IMR-90 (cell line): ENCODE measurements at regions of chr7 and their contacts with region 1.

Region 1: DNA sequence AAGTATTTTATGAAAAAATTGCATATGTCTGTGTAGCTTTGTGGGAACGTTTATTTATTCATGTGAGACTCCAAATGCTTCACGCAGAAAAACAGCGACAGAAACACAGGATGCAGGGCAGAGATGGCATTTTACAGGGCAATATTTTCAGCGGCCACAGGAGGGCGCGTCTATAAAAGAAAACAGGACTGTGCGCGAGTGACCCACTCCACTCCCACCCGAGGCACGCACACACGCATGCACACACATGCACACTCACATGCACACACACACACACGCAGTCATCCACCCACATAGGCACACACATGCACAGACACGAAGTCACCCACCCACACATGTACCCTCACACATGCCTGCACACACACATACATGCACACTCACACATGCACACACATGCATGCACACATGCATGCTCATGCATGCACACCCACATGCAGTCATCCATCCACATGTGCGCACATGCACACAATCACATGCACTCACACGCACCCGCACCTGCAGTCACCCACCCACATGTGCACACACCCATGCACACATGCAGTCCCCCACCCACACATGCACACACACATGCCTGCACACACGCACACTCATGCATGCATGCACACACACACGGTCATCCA is 96.3 kb downstream of the DNAJB6 start:
- DNase-seq: peak; percentile 17
- ATAC-seq: peak; percentile 73
- H3K4me3 ChIP-seq: peak overlapping the region; percentile 9; the same call in 1 of the 2 replicates
- H3K27ac ChIP-seq: no peak overlapping the region
- H3K4me1 ChIP-seq: peaks cover 4% of the 10 kb centered on the region; the same call in 1 of the 2 replicates
- H3K27me3 ChIP-seq: no peaks in the 10 kb centered on the region
- CTCF ChIP-seq: peak; percentile 63
- POLR2A ChIP-seq: no peak
- RAD21 ChIP-seq: peak; percentile 55

Region 2: DNA sequence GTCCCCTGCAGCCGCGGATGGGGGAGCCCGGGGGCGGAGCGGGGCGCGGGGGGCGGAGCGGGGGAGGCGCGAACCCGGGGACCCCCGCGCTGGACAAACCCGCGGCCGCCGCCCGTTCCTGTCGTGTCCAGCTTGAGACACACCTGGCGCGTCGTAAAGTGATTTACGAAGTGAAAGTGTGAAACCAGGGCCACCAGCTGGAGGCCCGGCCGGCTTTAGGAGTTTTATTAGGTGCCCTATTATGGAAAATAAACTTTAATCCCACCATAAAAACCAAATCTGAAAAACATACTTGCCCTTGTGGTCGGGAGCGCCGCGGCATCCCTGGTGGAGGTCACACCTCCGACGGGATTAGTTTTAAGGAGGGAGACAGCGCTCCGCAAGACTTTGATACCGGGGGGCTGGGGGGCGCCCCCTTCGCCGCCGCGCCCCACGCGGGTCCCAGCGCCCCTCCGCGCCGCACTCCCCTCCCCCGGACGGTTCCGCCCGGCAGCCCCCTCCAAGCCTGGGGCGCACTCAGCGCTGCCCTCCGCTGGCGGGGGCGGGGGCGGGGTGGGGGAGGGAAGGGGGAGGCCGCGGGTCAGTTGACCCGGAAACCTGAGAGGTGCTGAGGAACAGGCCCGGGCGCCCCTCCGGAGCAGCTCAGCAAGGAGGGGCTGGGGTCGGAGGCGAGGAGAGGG is 432.9 kb before region 1 on chr7:
- CTCF ChIA-PET with region 1: no interaction called
- POLR2A ChIA-PET with region 1: no interaction called
- dilution Hi-C with region 1: no loop called
- in situ Hi-C with region 1: no loop called
- intact Hi-C with region 1: no loop called
- DNase-seq: no peak
- ATAC-seq: no peak
- H3K4me3 ChIP-seq: peak overlapping the region; percentile 23; the same call in 1 of the 2 replicates
- H3K27ac ChIP-seq: no peak overlapping the region
- H3K4me1 ChIP-seq: no peaks in the 10 kb centered on the region
- H3K27me3 ChIP-seq: peaks cover 85% of the 10 kb centered on the region
- CTCF ChIP-seq: no peak
- POLR2A ChIP-seq: no peak
- RAD21 ChIP-seq: no peak

Region 3: DNA sequence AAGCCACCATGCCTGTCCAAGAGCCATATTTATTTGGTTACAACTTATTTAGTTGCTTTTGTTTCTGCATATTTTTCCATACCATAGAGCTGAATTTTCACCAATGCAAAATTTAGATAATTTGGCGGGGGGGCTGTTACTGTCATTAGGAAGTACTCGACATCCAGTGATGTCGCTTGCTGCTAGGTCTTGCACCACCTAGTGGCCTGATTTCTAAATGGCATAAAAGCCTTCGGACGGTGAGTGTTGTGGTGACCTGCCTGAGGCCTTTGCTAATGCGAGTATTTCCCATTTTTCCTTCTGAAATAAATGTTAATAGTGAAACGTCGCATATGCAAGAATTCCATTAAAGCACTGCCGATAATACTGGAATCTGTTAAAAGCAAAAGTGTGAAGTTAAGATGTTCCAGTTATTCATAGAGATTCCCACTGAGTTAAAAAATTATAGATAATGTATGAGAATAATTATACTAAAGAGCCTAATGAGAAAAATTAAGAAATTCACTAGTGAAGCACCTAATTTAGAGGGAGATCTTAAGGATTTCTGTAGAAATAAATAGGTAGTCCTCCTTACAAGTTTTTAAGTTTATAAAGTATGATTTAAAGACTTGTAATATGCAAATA is 182.3 kb before region 1 on chr7:
- CTCF ChIA-PET with region 1: no interaction called
- POLR2A ChIA-PET with region 1: no interaction called
- dilution Hi-C with region 1: no loop called
- in situ Hi-C with region 1: no loop called
- intact Hi-C with region 1: no loop called
- DNase-seq: peak; percentile 66
- ATAC-seq: peak; percentile 73
- H3K4me3 ChIP-seq: no peak overlapping the region
- H3K27ac ChIP-seq: no peak overlapping the region
- H3K4me1 ChIP-seq: no peaks in the 10 kb centered on the region
- H3K27me3 ChIP-seq: no peaks in the 10 kb centered on the region
- CTCF ChIP-seq: peak; percentile 64
- POLR2A ChIP-seq: no peak
- RAD21 ChIP-seq: peak; percentile 51

Region 4: DNA sequence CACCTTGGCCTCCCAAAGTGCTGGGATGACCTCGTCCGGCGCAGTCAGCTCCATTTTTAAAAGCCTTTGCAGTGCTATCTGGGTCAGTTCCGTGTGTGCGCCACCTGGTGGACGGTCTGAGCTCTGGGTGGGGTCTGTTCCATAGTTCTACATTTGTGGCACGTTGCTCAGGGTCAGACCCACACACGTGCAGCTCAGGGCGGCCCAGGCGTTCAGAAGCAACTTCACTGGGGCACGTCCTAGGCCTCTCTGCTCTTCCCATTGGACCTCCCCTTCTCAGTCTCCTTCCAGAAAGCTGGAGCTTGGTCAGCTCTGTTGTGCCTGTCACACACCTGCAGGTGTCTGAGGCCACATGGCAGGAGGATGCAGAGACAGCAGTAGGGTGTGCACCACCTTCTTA is 41.6 kb after region 1 on chr7:
- CTCF ChIA-PET with region 1: interaction called, 4 read pairs
- POLR2A ChIA-PET with region 1: no interaction called
- dilution Hi-C with region 1: no loop called
- in situ Hi-C with region 1: no loop called
- intact Hi-C with region 1: loop called (anchors 1 kb)
- DNase-seq: no peak
- ATAC-seq: peak; percentile 57; the same call in 1 of the 2 replicates
- H3K4me3 ChIP-seq: no peak overlapping the region
- H3K27ac ChIP-seq: no peak overlapping the region
- H3K4me1 ChIP-seq: no peaks in the 10 kb centered on the region
- H3K27me3 ChIP-seq: no peaks in the 10 kb centered on the region
- CTCF ChIP-seq: peak; percentile 35
- POLR2A ChIP-seq: no peak
- RAD21 ChIP-seq: no peak

Region 5: GRCh38 chr7:158976849-158977593 is 1544.0 kb after region 1 on chr7:
- CTCF ChIA-PET with region 1: no interaction called
- POLR2A ChIA-PET with region 1: no interaction called
- dilution Hi-C with region 1: no loop called
- in situ Hi-C with region 1: no loop called
- intact Hi-C with region 1: loop called (anchors 2 kb)
- DNase-seq: peak; percentile 51
- ATAC-seq: peak; percentile 94
- H3K4me3 ChIP-seq: peak overlapping the region; percentile 4; the same call in 1 of the 2 replicates
- H3K27ac ChIP-seq: no peak overlapping the region
- H3K4me1 ChIP-seq: no peaks in the 10 kb centered on the region
- H3K27me3 ChIP-seq: no peaks in the 10 kb centered on the region
- CTCF ChIP-seq: peak; percentile 76
- POLR2A ChIP-seq: no peak
- RAD21 ChIP-seq: peak; percentile 69